Activated CD4-positive, alpha-beta T cell treated with anti-CD3 and anti-CD28 coated beads for 36 hours (primary cell): ENCODE measurements at regions of chr17 and their contacts with region 1.

Region 1: GRCh38 chr17:1488030-1488863 is 4.2 kb downstream of the MYO1C start:
- DNase-seq: peak; percentile 77
- ATAC-seq: peak; percentile 10
- H3K4me3 Mint-ChIP-seq: peak overlapping the region; percentile 71
- H3K27ac Mint-ChIP-seq: no peak overlapping the region
- H3K4me1 Mint-ChIP-seq: peaks cover 42% of the 10 kb centered on the region
- H3K27me3 Mint-ChIP-seq: no peaks in the 10 kb centered on the region

Region 2: GRCh38 chr17:1462287-1463112 is 25.7 kb before region 1 on chr17:
- CTCF ChIA-PET with region 1: no interaction called
- POLR2A ChIA-PET with region 1: interaction called, 4 read pairs
- intact Hi-C with region 1: loop called (anchors 1 to 2 kb)
- DNase-seq: peak; percentile 32
- ATAC-seq: no peak
- H3K4me3 Mint-ChIP-seq: peak overlapping the region; percentile 37
- H3K27ac Mint-ChIP-seq: no peak overlapping the region
- H3K4me1 Mint-ChIP-seq: peaks cover 38% of the 10 kb centered on the region
- H3K27me3 Mint-ChIP-seq: peaks cover 16% of the 10 kb centered on the region

Region 3: GRCh38 chr17:1561400-1562175 is 73.3 kb after region 1 on chr17:
- CTCF ChIA-PET with region 1: no interaction called
- POLR2A ChIA-PET with region 1: no interaction called
- intact Hi-C with region 1: loop called in 1 of 2 experiments (anchors 1 kb)
- DNase-seq: peak; percentile 64
- ATAC-seq: peak; percentile 35
- H3K4me3 Mint-ChIP-seq: peak overlapping the region; percentile 81
- H3K27ac Mint-ChIP-seq: no peak overlapping the region
- H3K4me1 Mint-ChIP-seq: peaks cover 27% of the 10 kb centered on the region
- H3K27me3 Mint-ChIP-seq: no peaks in the 10 kb centered on the region